ENCODE measurements at regions of chr11 and their contacts with region 1.

Region 1: GRCh38 chr11:74321487-74322188 is 10.2 kb upstream of the P4HA3 start:
- DNase-seq: peak; percentile 39
- ATAC-seq: 0 out of 2 replicates have a peak, but pooled peaks have one; percentile 58
- H3K4me3 Mint-ChIP-seq: no peak overlapping the region
- H3K27ac Mint-ChIP-seq: no peak overlapping the region
- H3K4me1 Mint-ChIP-seq: peaks cover 5% of the 10 kb centered on the region; the same call in 1 of the 2 replicates
- H3K27me3 Mint-ChIP-seq: peaks cover 8% of the 10 kb centered on the region
- CTCF ChIP-seq: peak; percentile 61

Region 2: DNA sequence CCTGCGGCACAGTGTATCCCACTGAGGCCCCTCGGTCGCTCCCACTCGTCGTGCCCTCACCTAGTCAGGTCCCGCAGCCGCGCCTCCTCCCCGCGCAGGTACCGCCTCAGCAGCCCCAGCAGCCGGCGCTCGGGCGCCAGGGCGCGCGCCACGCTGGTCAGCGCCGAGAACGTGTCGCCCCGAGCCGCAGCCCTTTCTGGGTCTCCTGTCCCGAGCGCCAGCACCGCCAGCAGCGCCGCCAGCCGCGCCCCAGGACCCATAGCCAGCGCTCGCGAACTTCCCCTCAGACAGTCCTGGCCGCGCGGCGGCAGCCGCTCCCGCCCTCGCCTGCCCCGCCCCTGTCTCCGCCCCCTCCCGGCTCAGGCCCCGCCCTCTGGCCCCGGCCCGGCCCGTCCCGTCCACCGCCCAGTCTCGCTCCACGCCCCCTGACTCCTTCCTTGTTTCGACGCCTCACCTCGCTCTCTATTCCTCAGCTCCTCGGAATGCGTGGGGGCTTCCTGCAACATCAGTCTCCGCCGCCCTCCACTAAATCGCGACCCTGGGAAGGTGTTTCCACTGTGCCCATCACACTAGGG is 10.2 kb before region 1 on chr11 and contains the start of gene P4HA3:
- CTCF ChIA-PET with region 1: interaction called, 10 read pairs
- POLR2A ChIA-PET with region 1: no interaction called
- DNase-seq: peak; percentile 85
- ATAC-seq: peak; percentile 97
- H3K4me3 Mint-ChIP-seq: peak within 1 kb of the TSS; percentile 74
- H3K27ac Mint-ChIP-seq: no peak within 1 kb of the TSS
- H3K4me1 Mint-ChIP-seq: peaks cover 9% of the 10 kb centered on the region
- H3K27me3 Mint-ChIP-seq: peaks cover 61% of the 10 kb centered on the region
- CTCF ChIP-seq: no peak
- total RNA-seq, gene P4HA3: 0.13 to 0.14 TPM in 2 of 3 replicates, not detected in the other

Region 3: DNA sequence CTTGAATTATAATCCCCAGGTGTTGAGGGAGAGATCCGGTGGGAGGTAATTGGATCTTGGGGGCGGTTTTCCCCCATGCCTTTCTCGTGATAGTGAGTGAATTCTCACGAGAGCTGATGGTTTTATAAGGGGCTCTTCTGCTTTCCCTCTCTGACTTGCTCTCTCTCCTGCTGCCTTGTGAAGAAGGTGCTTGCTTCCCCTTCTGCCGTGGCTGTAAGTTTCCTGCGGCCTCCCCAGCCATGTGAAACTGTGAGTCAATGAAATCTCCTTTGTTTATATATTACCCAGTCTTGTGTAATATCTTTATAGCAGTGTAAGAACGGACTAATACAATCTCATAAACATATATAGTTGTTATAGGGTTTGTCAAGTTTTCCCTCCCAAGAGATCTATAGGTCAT is 112.9 kb after region 1 on chr11:
- CTCF ChIA-PET with region 1: no interaction called
- POLR2A ChIA-PET with region 1: no interaction called
- DNase-seq: no peak
- ATAC-seq: no peak
- H3K4me3 Mint-ChIP-seq: no peak overlapping the region
- H3K27ac Mint-ChIP-seq: no peak overlapping the region
- H3K4me1 Mint-ChIP-seq: no peaks in the 10 kb centered on the region
- H3K27me3 Mint-ChIP-seq: no peaks in the 10 kb centered on the region; the same call in 1 of the 2 replicates
- CTCF ChIP-seq: no peak

Measured in WTC11 (cell line).